A673 (cell line): ENCODE measurements at regions of chr17 and their contacts with region 1.

Region 1: DNA sequence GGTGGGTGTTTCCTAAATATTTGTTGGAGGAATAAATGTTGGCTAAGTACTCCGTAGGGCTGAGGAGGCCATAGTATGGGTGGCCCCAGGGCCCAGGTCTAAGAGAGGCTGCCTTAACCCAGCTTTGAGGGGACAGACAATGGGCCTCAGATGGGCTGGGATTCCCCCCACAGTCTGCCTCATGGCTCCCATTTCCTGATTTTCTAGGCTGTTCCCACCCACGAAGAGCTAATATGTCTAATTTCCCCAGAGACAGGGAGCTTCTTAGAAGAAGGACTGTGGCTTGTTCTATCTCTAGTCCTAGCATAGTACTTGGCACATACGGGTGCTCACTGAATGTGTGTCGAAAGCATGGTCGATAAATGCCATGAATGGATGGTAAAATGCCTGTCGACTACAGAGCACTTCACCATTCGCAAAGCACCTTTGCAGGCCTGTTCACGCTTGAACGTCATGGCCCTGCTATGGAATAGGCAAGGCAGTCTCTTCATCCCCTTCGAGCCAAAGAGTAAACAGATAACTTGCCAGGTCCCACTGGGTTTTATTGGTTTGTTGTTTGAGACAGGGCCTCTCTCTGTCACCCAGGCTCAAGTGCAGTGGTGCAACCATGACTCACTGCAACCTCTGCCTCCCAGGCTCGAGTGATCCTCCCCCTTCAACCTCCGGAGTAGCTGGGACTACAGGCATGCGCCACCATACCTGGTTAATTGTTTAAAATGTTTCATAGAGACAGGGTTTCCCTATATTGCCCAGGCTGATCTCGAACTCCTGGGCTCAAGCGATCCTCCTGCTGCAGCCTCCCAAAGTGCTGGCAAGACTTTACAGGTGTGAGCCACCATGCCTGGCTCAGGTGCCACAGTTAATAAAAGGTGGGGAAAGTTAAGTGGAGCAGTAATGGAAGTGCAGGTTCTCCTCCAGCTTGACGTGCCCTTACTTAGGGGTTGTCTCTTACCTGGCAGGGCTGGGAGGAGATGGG is 9.7 kb downstream of the CHAD start:
- DNase-seq: no peak
- H3K4me3 ChIP-seq: no peak overlapping the region
- H3K27ac ChIP-seq: no peak overlapping the region
- H3K4me1 ChIP-seq: peaks cover 9% of the 10 kb centered on the region
- H3K27me3 ChIP-seq: no peaks in the 10 kb centered on the region
- CTCF ChIP-seq: no peak

Region 2: DNA sequence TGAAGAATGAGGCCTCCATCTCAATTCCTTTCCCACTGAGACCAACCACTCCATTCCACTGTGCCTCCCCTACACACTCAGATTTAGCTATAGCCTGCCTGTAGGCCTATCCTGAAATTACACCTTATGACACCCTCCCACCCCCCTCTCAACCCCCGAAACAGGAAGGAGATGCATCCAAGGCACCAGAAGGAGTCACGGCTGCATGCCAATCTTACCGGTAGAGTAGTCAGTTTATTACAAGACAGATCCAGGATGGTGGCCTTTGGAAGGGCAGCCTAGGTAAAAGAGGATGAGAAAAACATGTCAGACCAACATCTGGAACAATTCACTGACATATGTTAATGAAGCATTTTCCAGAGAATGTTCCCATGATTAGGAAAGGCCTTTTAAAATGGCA is 64.3 kb before region 1 on chr17:
- CTCF ChIA-PET with region 1: no interaction called
- POLR2A ChIA-PET with region 1: no interaction called
- intact Hi-C with region 1: no loop called
- DNase-seq: no peak
- H3K4me3 ChIP-seq: no peak overlapping the region
- H3K27ac ChIP-seq: no peak overlapping the region
- H3K4me1 ChIP-seq: peaks cover 10% of the 10 kb centered on the region
- H3K27me3 ChIP-seq: no peaks in the 10 kb centered on the region
- CTCF ChIP-seq: no peak

Region 3: DNA sequence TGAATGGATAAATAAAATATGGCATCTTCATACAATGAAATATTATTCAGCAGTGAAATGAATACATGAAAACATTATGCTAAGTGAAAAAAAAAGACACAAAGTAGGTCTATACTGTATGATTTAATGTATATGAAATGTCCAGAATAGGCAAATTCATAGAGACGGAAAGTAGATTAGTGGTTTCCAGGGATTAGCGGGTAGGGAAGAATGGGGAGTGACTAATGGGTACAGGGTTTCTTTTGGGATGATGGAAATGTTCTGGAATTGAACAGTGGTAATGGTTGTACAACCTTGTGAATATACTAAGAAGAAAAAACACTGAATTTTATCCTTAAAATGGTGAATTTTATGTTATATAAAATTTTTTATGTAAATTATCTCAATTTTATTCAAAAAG is 40.7 kb after region 1 on chr17:
- CTCF ChIA-PET with region 1: interaction called, 15 read pairs
- POLR2A ChIA-PET with region 1: no interaction called
- intact Hi-C with region 1: no loop called
- DNase-seq: no peak
- H3K4me3 ChIP-seq: no peak overlapping the region
- H3K27ac ChIP-seq: no peak overlapping the region
- H3K4me1 ChIP-seq: no peaks in the 10 kb centered on the region
- H3K27me3 ChIP-seq: no peaks in the 10 kb centered on the region
- CTCF ChIP-seq: no peak